ENCODE measurements at regions of chr12 and their contacts with region 1.

Region 1: DNA sequence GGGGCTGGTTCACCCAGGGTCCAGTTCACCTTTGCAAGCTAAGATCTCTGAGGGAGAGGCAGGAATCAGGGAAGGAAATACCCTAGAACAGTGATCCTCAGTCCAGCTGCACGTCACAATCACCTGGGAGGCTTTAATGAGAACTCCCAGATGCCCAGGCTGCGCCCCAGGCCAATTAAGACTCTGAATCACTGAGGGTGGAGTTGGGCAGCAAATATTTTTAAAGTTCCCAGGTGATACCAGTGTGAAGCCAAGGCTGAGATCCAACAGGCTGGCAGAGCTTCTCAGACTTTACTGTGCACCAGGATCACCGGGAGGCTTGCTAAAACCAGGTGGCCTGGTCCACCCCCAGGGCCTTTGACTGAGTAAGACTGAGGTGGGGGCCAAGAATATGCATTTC is 23.8 kb downstream of the MYL2 start:
- DNase-seq: no peak
- ATAC-seq: no peak
- H3K4me3 ChIP-seq: no peak overlapping the region
- H3K27ac ChIP-seq: no peak overlapping the region
- H3K4me1 ChIP-seq: peaks cover 0 to 12% (median 5%) of the 10 kb centered on the region in 12 donors
- H3K27me3 ChIP-seq: peaks cover 0 to 5% (median 0%) of the 10 kb centered on the region in 9 donors
- CTCF ChIP-seq: no peak
- POLR2A ChIP-seq: no peak

Region 2: GRCh38 chr12:110449799-110450497 is 446.6 kb before region 1 on chr12 and contains the start of gene ARPC3:
- intact Hi-C with region 1: loop called in 2 of 10 experiments (anchors 5 kb)
- DNase-seq: peak; percentile 94 to 97 (median 95)
- ATAC-seq: peak; percentile 98 to 99 (median 99)
- H3K4me3 ChIP-seq: peak within 1 kb of the TSS; percentile 62 to 96 (median 85)
- H3K27ac ChIP-seq: peak within 1 kb of the TSS; percentile 74 to 99 (median 92)
- H3K4me1 ChIP-seq: peaks cover 0 to 46% (median 14%) of the 10 kb centered on the region in 12 donors
- H3K27me3 ChIP-seq: no peaks in the 10 kb centered on the region
- CTCF ChIP-seq: peak; percentile 76 to 96 (median 86)
- POLR2A ChIP-seq: peak in 1 of 2 donors; percentile 73
- total RNA-seq, gene ARPC3: 77.2 to 251 (median 108) TPM

Region 3: GRCh38 chr12:110853836-110854235 is 42.7 kb before region 1 on chr12:
- intact Hi-C with region 1: no loop called
- DNase-seq: no peak
- ATAC-seq: no peak
- H3K4me3 ChIP-seq: no peak overlapping the region
- H3K27ac ChIP-seq: no peak overlapping the region
- H3K4me1 ChIP-seq: no peaks in the 10 kb centered on the region
- H3K27me3 ChIP-seq: no peaks in the 10 kb centered on the region
- CTCF ChIP-seq: no peak
- POLR2A ChIP-seq: no peak

Region 4: GRCh38 chr12:110932046-110932445 is 35.5 kb after region 1 on chr12:
- intact Hi-C with region 1: no loop called
- DNase-seq: no peak
- ATAC-seq: no peak
- H3K4me3 ChIP-seq: peak overlapping the region in 7 of 12 donors; percentile 11 to 44 (median 21)
- H3K27ac ChIP-seq: peak overlapping the region; percentile 7 to 95 (median 78)
- H3K4me1 ChIP-seq: peaks cover 0 to 31% (median 6%) of the 10 kb centered on the region in 12 donors
- H3K27me3 ChIP-seq: peaks cover 0 to 14% (median 4%) of the 10 kb centered on the region in 9 donors
- CTCF ChIP-seq: peak in 7 of 12 donors; percentile 14 to 41 (median 28)
- POLR2A ChIP-seq: no peak

Region 5: GRCh38 chr12:111086947-111087700 is 190.6 kb after region 1 on chr12:
- intact Hi-C with region 1: no loop called
- DNase-seq: no peak
- ATAC-seq: no peak
- H3K4me3 ChIP-seq: no peak overlapping the region
- H3K27ac ChIP-seq: no peak overlapping the region
- H3K4me1 ChIP-seq: no peaks in the 10 kb centered on the region
- H3K27me3 ChIP-seq: peaks cover 0 to 16% (median 0%) of the 10 kb centered on the region in 9 donors
- CTCF ChIP-seq: no peak
- POLR2A ChIP-seq: no peak

Region 6: DNA sequence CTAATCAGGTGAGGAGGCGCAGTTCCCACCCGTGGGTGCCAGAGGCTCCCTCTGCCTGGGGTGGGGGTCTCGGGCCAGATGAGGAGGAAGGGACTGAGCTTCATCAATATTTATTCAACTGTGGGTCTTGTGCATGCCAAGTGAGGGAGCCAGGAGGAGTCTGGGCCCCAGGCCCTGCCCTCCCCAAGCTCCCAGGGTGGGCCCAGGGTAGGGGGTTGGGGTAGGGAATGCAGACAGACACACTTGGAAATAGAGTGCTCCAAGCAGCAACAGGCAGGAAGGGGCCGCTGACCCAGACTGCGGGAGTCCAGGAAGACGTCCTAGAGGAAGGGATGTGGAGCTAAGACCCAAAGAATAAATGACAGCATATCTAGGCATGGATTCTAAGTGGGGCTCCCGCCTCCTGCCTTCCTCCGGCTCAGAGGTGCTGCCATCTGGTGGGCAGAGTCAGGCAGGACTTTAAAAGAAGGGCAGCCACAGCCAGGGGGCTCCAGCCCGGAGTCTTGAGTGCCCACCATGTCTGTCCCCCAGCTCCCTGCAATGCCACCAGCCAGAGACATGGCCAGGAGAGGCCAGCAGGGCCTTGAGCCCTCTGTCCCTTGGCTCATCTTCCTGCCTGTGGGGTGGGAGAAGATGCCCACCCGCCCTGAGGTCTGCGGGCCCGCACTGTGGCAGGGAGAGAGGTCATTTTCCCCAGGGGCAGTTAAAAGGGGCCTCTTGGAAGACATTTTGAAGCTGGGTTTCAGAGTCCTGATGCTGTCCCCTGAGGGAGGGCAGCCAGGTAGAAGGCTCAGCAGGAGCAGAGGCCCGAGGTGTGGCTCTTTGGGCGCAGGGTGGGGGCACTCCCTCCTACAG is 402.2 kb after region 1 on chr12:
- intact Hi-C with region 1: loop called in 3 of 10 experiments (anchors 1 to 5 kb)
- DNase-seq: peak in 4 of 5 donors; percentile 27 to 54 (median 40)
- ATAC-seq: peak in 3 of 4 donors; percentile 72 to 74 (median 72)
- H3K4me3 ChIP-seq: no peak overlapping the region
- H3K27ac ChIP-seq: no peak overlapping the region
- H3K4me1 ChIP-seq: no peaks in the 10 kb centered on the region
- H3K27me3 ChIP-seq: no peaks in the 10 kb centered on the region
- CTCF ChIP-seq: peak; percentile 61 to 87 (median 76)
- POLR2A ChIP-seq: no peak

Region 7: GRCh38 chr12:111313833-111314259 is 417.3 kb after region 1 on chr12:
- intact Hi-C with region 1: loop called in 9 of 10 experiments (anchors 2 to 10 kb)
- DNase-seq: peak; percentile 56 to 87 (median 71)
- ATAC-seq: peak; percentile 24 to 81 (median 74)
- H3K4me3 ChIP-seq: peak overlapping the region in 2 of 12 donors; percentile 4 to 41
- H3K27ac ChIP-seq: no peak overlapping the region
- H3K4me1 ChIP-seq: peaks cover 0 to 24% (median 0%) of the 10 kb centered on the region in 12 donors
- H3K27me3 ChIP-seq: peaks cover 0 to 3% (median 0%) of the 10 kb centered on the region in 9 donors
- CTCF ChIP-seq: peak; percentile 82 to 94 (median 92)
- POLR2A ChIP-seq: no peak

Region 8: DNA sequence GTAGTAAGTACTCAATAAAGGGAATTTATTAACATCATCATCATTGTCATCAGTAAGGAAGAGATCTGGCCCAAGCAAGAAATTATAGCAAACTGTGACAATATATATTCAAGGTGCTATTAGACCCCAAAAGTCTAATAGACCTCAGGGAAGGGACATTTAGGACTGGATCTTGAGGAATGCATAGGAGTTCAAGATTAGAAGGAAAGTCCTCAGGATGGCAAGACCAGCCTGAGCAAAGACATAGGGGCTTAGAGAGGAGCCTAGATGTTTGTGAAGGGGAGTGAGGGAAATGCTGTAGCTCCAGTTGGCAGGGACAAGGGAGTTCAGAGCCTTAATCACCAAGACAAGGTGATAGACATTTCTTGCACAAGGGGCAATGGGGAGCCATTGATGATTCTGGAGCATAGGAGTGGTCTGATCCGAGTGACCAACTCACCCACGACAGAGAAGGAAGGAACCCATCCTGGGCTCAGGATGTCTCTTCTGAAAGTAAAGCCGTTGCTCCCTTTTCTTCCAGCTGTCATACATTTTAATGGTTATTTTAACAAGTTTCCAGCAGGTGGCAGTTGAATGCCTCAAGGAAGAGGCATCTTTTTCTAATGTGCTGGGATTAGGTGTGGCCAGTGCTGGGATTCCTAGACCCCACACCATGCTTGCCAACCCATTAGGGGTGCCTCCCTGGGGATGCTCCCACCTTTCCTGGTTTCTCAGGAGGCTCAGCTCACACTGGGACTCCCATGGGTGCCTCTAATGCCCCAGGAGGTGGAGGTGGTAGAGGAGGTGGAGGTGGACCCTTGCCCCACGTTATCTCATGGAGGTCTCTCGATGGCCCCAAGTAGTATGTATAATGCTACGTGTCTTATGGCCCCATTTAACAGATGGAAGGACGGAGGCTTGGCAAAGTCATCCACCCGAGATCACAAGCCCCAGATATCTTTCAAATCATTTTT is 434.5 kb after region 1 on chr12:
- intact Hi-C with region 1: no loop called
- DNase-seq: no peak
- ATAC-seq: peak in 3 of 4 donors; percentile 35 to 45 (median 39)
- H3K4me3 ChIP-seq: no peak overlapping the region
- H3K27ac ChIP-seq: no peak overlapping the region
- H3K4me1 ChIP-seq: no peaks in the 10 kb centered on the region
- H3K27me3 ChIP-seq: peaks cover 0 to 7% (median 0%) of the 10 kb centered on the region in 9 donors
- CTCF ChIP-seq: peak; percentile 26 to 61 (median 40)
- POLR2A ChIP-seq: no peak

Measured in heart left ventricle (tissue), 16 donors.